ENCODE measurements at regions of chr5 and their contacts with region 1.

Region 1: DNA sequence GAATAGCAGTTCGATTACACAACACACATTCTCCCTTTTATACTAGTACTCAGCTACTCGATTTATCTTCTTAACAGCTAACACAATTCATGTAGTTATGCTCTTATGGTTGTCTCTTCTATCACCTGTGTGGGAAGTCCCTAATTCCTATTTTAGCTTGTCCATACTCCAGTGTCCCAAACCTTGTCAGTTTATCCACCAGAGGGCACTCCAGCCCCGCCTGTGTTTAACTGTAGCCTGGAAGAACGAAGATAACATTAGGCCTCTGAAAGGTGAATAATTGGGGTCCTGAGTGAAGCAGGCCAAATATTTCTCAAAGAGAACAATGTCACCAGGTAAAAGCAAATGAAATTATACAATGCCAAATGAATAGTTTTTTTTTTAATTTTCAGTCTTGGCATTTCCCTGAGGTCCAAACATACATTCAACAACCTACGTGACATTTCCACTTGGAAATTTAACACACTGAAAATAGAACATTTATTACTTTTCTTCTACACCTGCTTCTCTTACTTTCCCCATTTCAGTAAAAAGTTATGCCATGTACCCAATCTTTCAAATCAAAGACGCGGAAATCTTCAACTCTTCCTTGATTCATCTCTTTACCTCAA is 560.7 kb downstream of the HTR1A start:
- DNase-seq: no peak
- ATAC-seq: no peak

Region 2: GRCh38 chr5:63963080-63963735 is 561.7 kb after region 1 on chr5:
- intact Hi-C with region 1: loop called (anchors 5 kb)
- DNase-seq: no peak
- ATAC-seq: no peak

Measured in Right ventricle myocardium inferior (tissue), 1 donor.